GM12878 (cell line): ENCODE measurements at regions of chr7 and their contacts with region 1.

Region 1: DNA sequence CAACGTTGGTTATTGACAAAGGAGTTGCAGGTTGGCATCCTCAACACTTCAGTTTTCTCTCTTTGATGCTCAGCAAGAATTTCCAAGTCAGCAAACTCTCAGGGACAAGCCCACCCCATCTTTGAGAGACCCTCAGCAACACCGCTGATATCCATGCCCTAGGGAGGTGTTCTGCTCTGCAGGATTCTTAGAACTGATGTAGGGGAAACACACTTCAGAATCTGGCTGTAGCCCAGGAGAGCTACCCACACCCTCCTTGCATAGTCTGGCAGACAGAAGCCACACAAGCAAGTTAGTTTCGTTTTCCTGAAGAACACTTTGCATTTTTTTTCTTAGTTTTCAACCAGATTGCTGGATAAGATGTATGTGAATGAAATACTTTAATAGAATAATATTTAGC is 822 bp downstream of the SAMD9L start:
- DNase-seq: peak; percentile 51
- ATAC-seq: peak; percentile 90
- H3K4me3 ChIP-seq: peak overlapping the region; percentile 91
- H3K27ac ChIP-seq: peak overlapping the region; percentile 84
- H3K4me1 ChIP-seq: peaks cover 10% of the 10 kb centered on the region; the same call in 1 of the 2 replicates
- H3K27me3 ChIP-seq: no peaks in the 10 kb centered on the region
- CTCF ChIP-seq: no peak
- EP300 ChIP-seq: no peak
- POLR2A ChIP-seq: no peak
- RAD21 ChIP-seq: no peak

Region 2: GRCh38 chr7:92557249-92557648 is 590.1 kb before region 1 on chr7:
- CTCF ChIA-PET with region 1: no interaction called
- POLR2A ChIA-PET with region 1: no interaction called
- RAD21 ChIA-PET with region 1: no interaction called
- SMC1A ChIA-PET with region 1: no interaction called
- in situ Hi-C with region 1: no loop called
- intact Hi-C with region 1: no loop called
- DNase-seq: no peak
- ATAC-seq: peak; percentile 39
- H3K4me3 ChIP-seq: no peak overlapping the region
- H3K27ac ChIP-seq: no peak overlapping the region
- H3K4me1 ChIP-seq: no peaks in the 10 kb centered on the region
- H3K27me3 ChIP-seq: no peaks in the 10 kb centered on the region
- CTCF ChIP-seq: no peak
- EP300 ChIP-seq: no peak
- POLR2A ChIP-seq: no peak
- RAD21 ChIP-seq: no peak

Region 3: GRCh38 chr7:92731335-92732063 is 415.9 kb before region 1 on chr7:
- CTCF ChIA-PET with region 1: no interaction called
- POLR2A ChIA-PET with region 1: no interaction called
- RAD21 ChIA-PET with region 1: no interaction called
- SMC1A ChIA-PET with region 1: no interaction called
- in situ Hi-C with region 1: no loop called
- intact Hi-C with region 1: no loop called
- DNase-seq: no peak
- ATAC-seq: peak; percentile 68
- H3K4me3 ChIP-seq: no peak overlapping the region
- H3K27ac ChIP-seq: peak overlapping the region; percentile 45
- H3K4me1 ChIP-seq: peaks cover 14% of the 10 kb centered on the region
- H3K27me3 ChIP-seq: no peaks in the 10 kb centered on the region
- CTCF ChIP-seq: no peak
- EP300 ChIP-seq: peak; percentile 29 to 45; a peak in 1 of 4 replicates
- POLR2A ChIP-seq: no peak
- RAD21 ChIP-seq: no peak

Region 4: DNA sequence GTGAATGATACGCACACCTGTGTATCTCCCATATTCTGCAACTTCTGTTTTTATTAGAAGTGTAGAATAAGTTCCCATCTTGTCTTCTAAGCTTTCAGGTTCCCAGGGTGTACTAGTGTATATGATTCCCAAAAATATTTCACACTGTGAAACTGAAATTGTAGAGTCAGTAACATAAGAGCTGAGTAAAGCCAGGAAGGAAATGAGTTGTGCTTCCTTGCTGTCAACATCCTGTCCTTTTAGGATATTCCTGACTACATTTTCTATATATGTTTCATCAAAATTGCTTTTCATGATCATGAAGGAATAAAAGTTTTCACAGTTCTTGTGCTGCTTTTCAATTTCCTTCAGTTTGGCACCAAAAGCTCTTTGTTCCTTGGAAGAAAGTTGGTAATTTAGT is 14.4 kb before region 1 on chr7:
- CTCF ChIA-PET with region 1: interaction called, 4 read pairs
- POLR2A ChIA-PET with region 1: interaction called, 3 read pairs
- RAD21 ChIA-PET with region 1: no interaction called
- SMC1A ChIA-PET with region 1: interaction called, 10 read pairs
- in situ Hi-C with region 1: no loop called
- intact Hi-C with region 1: no loop called
- DNase-seq: no peak
- ATAC-seq: no peak
- H3K4me3 ChIP-seq: no peak overlapping the region
- H3K27ac ChIP-seq: no peak overlapping the region
- H3K4me1 ChIP-seq: no peaks in the 10 kb centered on the region
- H3K27me3 ChIP-seq: no peaks in the 10 kb centered on the region
- CTCF ChIP-seq: no peak
- EP300 ChIP-seq: no peak
- POLR2A ChIP-seq: no peak
- RAD21 ChIP-seq: no peak

Region 5: GRCh38 chr7:93165447-93165846 is 18.1 kb after region 1 on chr7:
- CTCF ChIA-PET with region 1: interaction called, 7 read pairs
- POLR2A ChIA-PET with region 1: interaction called, 6 read pairs
- RAD21 ChIA-PET with region 1: interaction called, 9 read pairs
- SMC1A ChIA-PET with region 1: interaction called, 18 read pairs
- in situ Hi-C with region 1: no loop called
- intact Hi-C with region 1: loop called (anchors 1 kb)
- DNase-seq: peak; percentile 77
- ATAC-seq: peak; percentile 99
- H3K4me3 ChIP-seq: 0 out of 2 replicates have a peak overlapping the region, but pooled peaks have one; percentile 33
- H3K27ac ChIP-seq: peak overlapping the region; percentile 80; the same call in 1 of the 2 replicates
- H3K4me1 ChIP-seq: peaks cover 2% of the 10 kb centered on the region; the same call in 1 of the 2 replicates
- H3K27me3 ChIP-seq: no peaks in the 10 kb centered on the region
- CTCF ChIP-seq: no peak
- EP300 ChIP-seq: peak in 1 of 2 experiments; percentile 17; a peak in 2 of 4 replicates
- POLR2A ChIP-seq: no peak
- RAD21 ChIP-seq: no peak

Region 6: GRCh38 chr7:94792270-94792669 is 1644.9 kb after region 1 on chr7:
- CTCF ChIA-PET with region 1: no interaction called
- POLR2A ChIA-PET with region 1: no interaction called
- RAD21 ChIA-PET with region 1: no interaction called
- SMC1A ChIA-PET with region 1: no interaction called
- in situ Hi-C with region 1: no loop called
- intact Hi-C with region 1: no loop called
- DNase-seq: no peak
- ATAC-seq: no peak
- H3K4me3 ChIP-seq: no peak overlapping the region
- H3K27ac ChIP-seq: no peak overlapping the region
- H3K4me1 ChIP-seq: no peaks in the 10 kb centered on the region
- H3K27me3 ChIP-seq: no peaks in the 10 kb centered on the region
- CTCF ChIP-seq: no peak
- EP300 ChIP-seq: no peak
- POLR2A ChIP-seq: no peak
- RAD21 ChIP-seq: no peak